CD4-positive, alpha-beta T cell (primary cell): ENCODE measurements at regions of chr6 and their contacts with region 1.

Region 1: GRCh38 chr6:45714741-45715507 is 300.7 kb downstream of the CLIC5 start:
- DNase-seq: peak in 13 of 14 experiments; percentile 10 to 84 (median 37)
- ATAC-seq: peak; percentile 91
- H3K4me3 ChIP-seq: no peak overlapping the region
- H3K4me3 Mint-ChIP-seq: peak overlapping the region; percentile 48
- H3K27ac ChIP-seq: no peak overlapping the region
- H3K27ac Mint-ChIP-seq: peak overlapping the region; percentile 12
- H3K4me1 ChIP-seq: peaks cover 22% of the 10 kb centered on the region
- H3K4me1 Mint-ChIP-seq: peaks cover 22% of the 10 kb centered on the region
- H3K27me3 ChIP-seq: no peaks in the 10 kb centered on the region
- H3K27me3 Mint-ChIP-seq: peaks cover 5% of the 10 kb centered on the region
- CTCF ChIP-seq: peak; percentile 84

Region 2: GRCh38 chr6:44431118-44431725 is 1283.7 kb before region 1 on chr6:
- CTCF ChIA-PET with region 1: no interaction called
- POLR2A ChIA-PET with region 1: no interaction called
- intact Hi-C with region 1: loop called in 1 of 2 experiments (anchors 1 kb)
- DNase-seq: peak in 9 of 14 experiments; percentile 6 to 67 (median 24)
- ATAC-seq: peak; percentile 68
- H3K4me3 ChIP-seq: no peak overlapping the region
- H3K4me3 Mint-ChIP-seq: no peak overlapping the region
- H3K27ac ChIP-seq: no peak overlapping the region
- H3K27ac Mint-ChIP-seq: no peak overlapping the region
- H3K4me1 ChIP-seq: no peaks in the 10 kb centered on the region
- H3K4me1 Mint-ChIP-seq: peaks cover 11% of the 10 kb centered on the region
- H3K27me3 ChIP-seq: no peaks in the 10 kb centered on the region
- H3K27me3 Mint-ChIP-seq: no peaks in the 10 kb centered on the region
- CTCF ChIP-seq: peak; percentile 71

Region 3: GRCh38 chr6:44593539-44593944 is 1121.4 kb before region 1 on chr6:
- CTCF ChIA-PET with region 1: interaction called, 4 read pairs
- POLR2A ChIA-PET with region 1: no interaction called
- intact Hi-C with region 1: loop called (anchors 2 kb)
- DNase-seq: peak; percentile 3 to 71 (median 32)
- ATAC-seq: peak; percentile 44
- H3K4me3 ChIP-seq: no peak overlapping the region
- H3K4me3 Mint-ChIP-seq: no peak overlapping the region
- H3K27ac ChIP-seq: no peak overlapping the region
- H3K27ac Mint-ChIP-seq: no peak overlapping the region
- H3K4me1 ChIP-seq: no peaks in the 10 kb centered on the region
- H3K4me1 Mint-ChIP-seq: no peaks in the 10 kb centered on the region
- H3K27me3 ChIP-seq: peaks cover 0 to 5% of the 10 kb centered on the region in 2 experiments
- H3K27me3 Mint-ChIP-seq: peaks cover 13% of the 10 kb centered on the region
- CTCF ChIP-seq: peak; percentile 60

Region 4: GRCh38 chr6:44855562-44856411 is 859.1 kb before region 1 on chr6:
- CTCF ChIA-PET with region 1: interaction called, 5 read pairs
- POLR2A ChIA-PET with region 1: no interaction called
- intact Hi-C with region 1: loop called in 1 of 2 experiments (anchors 10 kb)
- DNase-seq: no peak
- ATAC-seq: no peak
- H3K4me3 ChIP-seq: no peak overlapping the region
- H3K4me3 Mint-ChIP-seq: no peak overlapping the region
- H3K27ac ChIP-seq: no peak overlapping the region
- H3K27ac Mint-ChIP-seq: no peak overlapping the region
- H3K4me1 ChIP-seq: peaks cover 2% of the 10 kb centered on the region
- H3K4me1 Mint-ChIP-seq: peaks cover 60% of the 10 kb centered on the region
- H3K27me3 ChIP-seq: no peaks in the 10 kb centered on the region
- H3K27me3 Mint-ChIP-seq: no peaks in the 10 kb centered on the region
- CTCF ChIP-seq: no peak

Region 5: GRCh38 chr6:45421709-45422502 is 293.0 kb before region 1 on chr6:
- CTCF ChIA-PET with region 1: interaction called, 6 read pairs
- POLR2A ChIA-PET with region 1: interaction called, 21 read pairs
- intact Hi-C with region 1: loop called (anchors 2 to 5 kb)
- DNase-seq: peak in 13 of 14 experiments; percentile 19 to 77 (median 42)
- ATAC-seq: peak; percentile 41
- H3K4me3 ChIP-seq: peak overlapping the region; percentile 94
- H3K4me3 Mint-ChIP-seq: peak overlapping the region; percentile 98
- H3K27ac ChIP-seq: peak overlapping the region; percentile 34 to 50
- H3K27ac Mint-ChIP-seq: peak overlapping the region; percentile 85
- H3K4me1 ChIP-seq: peaks cover 49% of the 10 kb centered on the region
- H3K4me1 Mint-ChIP-seq: peaks cover 39% of the 10 kb centered on the region
- H3K27me3 ChIP-seq: peaks cover 18 to 31% of the 10 kb centered on the region in 2 experiments
- H3K27me3 Mint-ChIP-seq: peaks cover 38% of the 10 kb centered on the region
- CTCF ChIP-seq: no peak

Region 6: GRCh38 chr6:45663551-45664221 is 51.2 kb before region 1 on chr6:
- CTCF ChIA-PET with region 1: no interaction called
- POLR2A ChIA-PET with region 1: no interaction called
- intact Hi-C with region 1: no loop called
- DNase-seq: peak; percentile 17 to 62 (median 41)
- ATAC-seq: peak; percentile 78
- H3K4me3 ChIP-seq: peak overlapping the region; percentile 47
- H3K4me3 Mint-ChIP-seq: peak overlapping the region; percentile 58
- H3K27ac ChIP-seq: no peak overlapping the region
- H3K27ac Mint-ChIP-seq: no peak overlapping the region
- H3K4me1 ChIP-seq: peaks cover 29% of the 10 kb centered on the region
- H3K4me1 Mint-ChIP-seq: peaks cover 41% of the 10 kb centered on the region
- H3K27me3 ChIP-seq: peaks cover 2 to 3% of the 10 kb centered on the region in 2 experiments
- H3K27me3 Mint-ChIP-seq: peaks cover 20% of the 10 kb centered on the region
- CTCF ChIP-seq: no peak

Region 7: DNA sequence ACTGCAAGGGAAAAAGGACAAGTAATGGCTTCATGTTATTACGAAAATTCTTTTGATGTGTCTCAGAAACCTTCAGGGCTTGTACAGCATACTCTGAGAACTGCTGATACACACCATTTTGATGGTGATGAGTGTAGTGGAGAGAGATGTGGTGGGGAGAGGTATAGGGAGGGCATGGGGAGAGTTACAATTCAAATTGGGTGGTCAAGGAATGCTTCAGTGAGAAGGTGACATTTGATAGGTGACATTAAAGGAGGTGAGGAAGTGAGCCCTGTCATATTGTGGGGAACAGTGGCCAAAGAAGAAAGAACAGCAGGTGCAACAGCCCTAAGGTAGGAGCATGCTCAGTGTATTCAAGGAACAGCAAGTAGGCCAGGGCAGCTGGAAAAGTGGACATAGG is 18.2 kb before region 1 on chr6:
- CTCF ChIA-PET with region 1: no interaction called
- POLR2A ChIA-PET with region 1: no interaction called
- intact Hi-C with region 1: no loop called
- DNase-seq: no peak
- ATAC-seq: no peak
- H3K4me3 ChIP-seq: no peak overlapping the region
- H3K4me3 Mint-ChIP-seq: no peak overlapping the region
- H3K27ac ChIP-seq: no peak overlapping the region
- H3K27ac Mint-ChIP-seq: no peak overlapping the region
- H3K4me1 ChIP-seq: no peaks in the 10 kb centered on the region
- H3K4me1 Mint-ChIP-seq: no peaks in the 10 kb centered on the region
- H3K27me3 ChIP-seq: no peaks in the 10 kb centered on the region
- H3K27me3 Mint-ChIP-seq: no peaks in the 10 kb centered on the region
- CTCF ChIP-seq: no peak